Ascending aorta (tissue), 2 donors: ENCODE measurements at regions of chr1 and their contacts with region 1.

Region 1: GRCh38 chr1:38012363-38013226 is at the start of gene UTP11:
- DNase-seq: peak; percentile 90 to 97
- H3K4me3 ChIP-seq: peak within 1 kb of the TSS; percentile 75 to 79
- H3K27ac ChIP-seq: peak within 1 kb of the TSS; percentile 88 to 94
- H3K4me1 ChIP-seq: peaks cover 13 to 31% of the 10 kb centered on the region in 2 donors
- H3K27me3 ChIP-seq: no peaks in the 10 kb centered on the region
- CTCF ChIP-seq: no peak
- total RNA-seq, gene UTP11: 16.5 TPM

Region 2: GRCh38 chr1:37553927-37554808 is 458.4 kb before region 1 on chr1 and contains the start of gene SNIP1:
- intact Hi-C with region 1: loop called (anchors 10 kb)
- DNase-seq: peak; percentile 68 to 96
- H3K4me3 ChIP-seq: peak within 1 kb of the TSS; percentile 90 to 94
- H3K27ac ChIP-seq: peak within 1 kb of the TSS; percentile 87 to 90
- H3K4me1 ChIP-seq: peaks cover 12 to 24% of the 10 kb centered on the region in 2 donors
- H3K27me3 ChIP-seq: no peaks in the 10 kb centered on the region
- CTCF ChIP-seq: no peak
- total RNA-seq, gene SNIP1: 14.4 TPM

Region 3: DNA sequence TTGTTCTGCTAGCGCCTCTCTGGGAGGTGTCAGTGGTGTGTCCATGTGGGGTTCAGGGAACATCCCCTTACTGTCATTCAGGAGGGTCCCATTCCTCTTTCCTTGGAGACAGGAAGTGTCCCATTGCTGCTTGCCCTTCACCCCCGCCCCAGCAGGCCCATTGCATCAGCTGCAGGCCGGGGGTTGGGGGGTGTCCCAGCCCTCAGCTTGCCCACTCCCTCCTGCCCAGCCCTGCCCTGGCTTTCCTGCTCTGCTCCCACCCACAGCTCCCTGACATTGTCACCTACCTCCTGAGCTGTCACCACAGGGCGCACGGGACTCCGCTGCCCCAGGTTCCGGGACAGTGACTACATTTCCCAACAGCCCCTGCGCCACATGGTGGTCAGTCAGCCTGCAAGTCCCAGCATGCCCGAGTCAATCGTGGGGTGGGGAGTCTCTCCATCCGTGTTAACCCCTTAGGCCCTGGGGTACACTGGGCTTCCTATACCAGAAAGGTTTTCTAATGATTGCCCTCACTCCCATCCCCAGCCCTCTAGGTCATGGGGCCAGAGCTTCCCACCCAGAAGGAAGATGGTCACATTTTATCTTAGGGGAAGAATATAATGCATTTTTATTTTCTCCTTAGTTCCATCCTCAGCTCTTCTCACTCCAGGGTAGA is 65.8 kb before region 1 on chr1 and contains the start of gene INPP5B:
- intact Hi-C with region 1: loop called (anchors 2 kb)
- DNase-seq: peak; percentile 79 to 95
- H3K4me3 ChIP-seq: peak within 1 kb of the TSS; percentile 90 to 91
- H3K27ac ChIP-seq: peak within 1 kb of the TSS; percentile 94
- H3K4me1 ChIP-seq: peaks cover 0 to 18% of the 10 kb centered on the region in 2 donors
- H3K27me3 ChIP-seq: no peaks in the 10 kb centered on the region
- CTCF ChIP-seq: peak in 1 of 3 experiments; percentile 13
- total RNA-seq, gene INPP5B: 11.7 TPM

Region 4: DNA sequence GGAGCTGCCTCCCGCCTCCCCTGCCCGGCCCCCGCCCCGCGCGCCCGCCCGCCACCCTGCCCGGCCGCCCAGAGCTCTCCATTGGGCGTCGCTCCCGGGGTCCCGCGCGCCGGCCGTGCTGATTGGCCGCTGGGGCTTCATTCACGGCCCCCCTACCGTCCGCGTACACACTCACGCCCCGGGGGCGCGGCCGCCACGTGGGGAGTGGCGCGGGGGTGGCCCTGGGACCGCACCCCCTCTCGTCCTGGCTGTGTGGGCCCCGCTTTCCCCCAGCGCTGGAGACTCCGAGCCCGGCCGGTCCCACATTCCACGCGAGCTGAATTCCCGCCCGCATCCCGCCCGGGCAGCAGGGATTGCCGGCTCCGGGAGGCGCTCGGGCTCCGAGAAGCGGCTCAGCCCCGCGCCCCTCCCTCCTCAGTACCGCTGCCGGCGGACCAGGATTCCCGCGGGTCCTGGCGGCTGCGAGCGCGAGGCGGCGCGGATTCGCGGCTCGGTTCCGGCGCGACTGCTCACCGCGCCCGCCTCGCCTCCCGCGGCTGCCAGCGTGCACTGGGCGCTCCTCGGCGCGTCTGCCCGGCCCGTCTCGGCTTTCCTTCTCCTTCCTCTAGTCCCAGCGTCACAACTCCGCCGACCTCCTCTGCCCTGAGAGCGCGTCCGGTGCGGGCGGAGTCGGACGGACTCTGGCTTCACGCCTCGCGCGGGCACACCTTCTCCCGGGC is 34.4 kb after region 1 on chr1:
- intact Hi-C with region 1: loop called (anchors 2 kb)
- DNase-seq: peak; percentile 64 to 92
- H3K4me3 ChIP-seq: peak overlapping the region; percentile 67 to 82
- H3K27ac ChIP-seq: peak overlapping the region; percentile 69 to 70
- H3K4me1 ChIP-seq: peaks cover 13 to 19% of the 10 kb centered on the region in 2 donors
- H3K27me3 ChIP-seq: peaks cover 25% of the 10 kb centered on the region
- CTCF ChIP-seq: peak in 2 of 3 experiments; percentile 3 to 13